ENCODE measurements at regions of chr1 and their contacts with region 1.

Region 1: DNA sequence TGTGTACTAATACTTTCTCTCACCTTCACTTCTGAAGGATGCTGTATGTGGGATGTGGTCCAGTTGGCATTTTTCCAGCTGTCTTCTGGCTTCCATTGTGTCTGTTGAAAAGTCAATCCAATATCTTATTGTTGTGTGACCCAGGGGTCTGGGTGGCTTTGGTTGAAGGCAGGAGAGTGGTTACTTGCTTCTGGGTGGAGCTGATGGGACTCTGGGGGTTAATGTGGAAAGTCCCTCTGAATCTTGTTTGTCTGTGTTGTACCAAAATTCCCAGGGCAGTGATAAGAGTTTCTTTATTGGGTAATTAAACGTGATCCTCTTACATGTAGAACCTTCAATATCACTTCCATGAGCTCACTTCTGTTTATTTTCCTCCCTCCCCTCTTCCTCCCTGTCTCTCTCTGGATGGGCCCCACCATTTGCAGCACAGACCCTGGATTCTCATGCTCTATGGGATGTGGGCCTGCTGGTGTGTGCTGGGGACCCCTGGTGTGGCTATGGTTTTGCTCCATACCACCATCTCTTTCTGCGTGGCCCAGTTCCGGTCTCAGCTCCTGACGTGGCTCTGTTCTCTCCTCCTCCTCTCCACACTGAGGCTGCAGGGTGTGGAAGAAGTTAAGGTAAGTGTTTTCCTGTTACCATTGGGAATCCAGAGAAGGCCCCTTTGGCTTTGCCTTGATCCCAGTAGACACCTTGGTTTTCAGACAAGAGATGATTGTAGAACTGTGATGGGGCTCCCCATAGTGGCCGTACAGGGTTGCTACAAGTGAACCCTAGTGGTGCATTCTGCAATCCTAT is 71.5 kb downstream of the HHAT start:
- DNase-seq: peak; percentile 74
- ATAC-seq: peak; percentile 83
- H3K4me3 ChIP-seq: no peak overlapping the region
- H3K27ac ChIP-seq: peak overlapping the region; percentile 9; the same call in 1 of the 2 replicates
- H3K4me1 ChIP-seq: no peaks in the 10 kb centered on the region
- H3K27me3 ChIP-seq: no peaks in the 10 kb centered on the region
- CTCF ChIP-seq: peak; percentile 85 to 92 (median 85)
- EP300 ChIP-seq: no peak; a peak in 1 of 4 replicates
- POLR2A ChIP-seq: no peak
- RAD21 ChIP-seq: peak; percentile 89

Region 2: DNA sequence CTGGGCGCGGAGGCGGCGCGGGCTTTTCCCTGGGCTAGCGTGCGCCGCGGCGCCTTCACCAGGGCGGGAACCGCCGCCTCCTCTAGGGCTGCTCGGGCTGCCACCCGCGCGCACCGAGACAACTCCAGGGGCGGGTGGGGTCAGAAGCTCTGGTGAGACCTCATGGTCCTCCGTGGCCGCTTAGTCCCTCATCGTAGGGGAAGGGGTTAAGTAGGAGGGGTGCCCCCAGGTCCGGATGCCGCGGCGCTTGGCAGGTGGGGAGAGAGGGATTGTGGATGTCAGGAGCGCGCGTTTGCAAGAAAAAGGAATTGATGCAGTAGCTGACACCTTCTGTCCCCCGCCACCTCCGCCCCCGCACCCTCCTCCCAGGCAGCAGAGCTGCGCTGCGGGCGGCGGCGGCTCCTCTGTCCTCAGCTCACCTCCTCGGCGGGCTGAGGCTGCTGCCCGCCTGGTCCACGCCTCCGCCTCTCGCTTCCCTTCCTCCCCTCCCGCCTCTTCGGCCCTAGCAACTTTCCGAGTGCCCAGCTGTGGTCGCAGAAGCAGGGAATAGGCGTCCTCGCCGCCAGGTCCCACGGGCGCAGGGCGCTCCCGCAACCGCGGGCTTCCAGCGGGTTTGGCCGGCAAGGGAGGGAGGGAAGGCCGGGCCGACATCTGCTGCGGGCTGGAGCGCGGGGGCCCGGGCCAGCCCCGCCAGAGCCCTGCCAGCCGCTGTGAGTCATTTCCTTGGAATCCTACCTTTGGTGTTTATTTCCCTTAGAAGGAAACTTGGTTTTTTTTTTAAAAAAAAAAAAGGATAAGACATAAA is 166.8 kb before region 1 on chr1:
- CTCF ChIA-PET with region 1: no interaction called
- POLR2A ChIA-PET with region 1: no interaction called
- RAD21 ChIA-PET with region 1: no interaction called
- SMC1A ChIA-PET with region 1: no interaction called
- in situ Hi-C with region 1: no loop called
- intact Hi-C with region 1: no loop called
- DNase-seq: no peak
- ATAC-seq: peak; percentile 55
- H3K4me3 ChIP-seq: no peak overlapping the region
- H3K27ac ChIP-seq: no peak overlapping the region
- H3K4me1 ChIP-seq: no peaks in the 10 kb centered on the region
- H3K27me3 ChIP-seq: peaks cover 8 to 9% of the 10 kb centered on the region in 2 experiments
- CTCF ChIP-seq: no peak
- EP300 ChIP-seq: no peak
- POLR2A ChIP-seq: no peak
- RAD21 ChIP-seq: no peak

Region 3: DNA sequence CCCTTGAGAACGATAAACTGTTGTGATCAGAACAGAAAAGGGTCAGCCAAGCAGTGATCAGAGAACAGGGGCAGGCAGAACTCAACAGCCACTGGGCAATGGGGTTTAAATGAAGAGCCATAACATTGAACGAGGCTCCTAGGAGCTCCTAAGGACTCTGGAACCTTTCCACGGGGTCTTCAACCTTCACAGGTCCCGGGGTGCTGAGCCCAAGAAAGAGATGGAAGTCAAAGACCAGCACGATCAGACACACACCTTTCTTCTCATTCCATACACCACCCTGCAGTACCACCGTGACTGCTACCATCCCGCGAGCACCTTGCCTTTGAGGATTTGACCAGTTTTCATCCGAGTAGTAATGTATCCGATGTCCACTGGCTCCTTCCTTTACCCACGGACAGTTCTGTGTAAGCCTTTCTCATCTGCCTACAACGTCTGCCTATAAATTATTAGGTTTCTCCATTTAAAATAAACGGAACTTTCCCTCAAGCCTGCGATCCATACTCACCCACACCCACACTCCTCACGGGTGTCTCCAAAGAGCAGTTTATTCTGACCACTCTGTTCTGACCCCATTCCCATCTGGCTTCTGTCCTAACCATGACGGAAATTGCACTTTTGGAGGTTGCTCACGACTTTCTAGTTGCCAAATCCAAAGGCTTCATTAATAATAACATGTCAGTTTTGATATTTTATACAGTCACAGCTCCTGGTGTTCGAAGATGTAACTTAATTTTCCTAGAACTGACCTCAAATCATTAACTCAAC is 88.3 kb before region 1 on chr1:
- CTCF ChIA-PET with region 1: interaction called, 19 read pairs
- POLR2A ChIA-PET with region 1: no interaction called
- RAD21 ChIA-PET with region 1: interaction called, 23 read pairs
- SMC1A ChIA-PET with region 1: interaction called, 9 read pairs
- in situ Hi-C with region 1: no loop called
- intact Hi-C with region 1: loop called (anchors 5 kb)
- DNase-seq: no peak
- ATAC-seq: no peak; the same call in 1 of the 3 replicates
- H3K4me3 ChIP-seq: no peak overlapping the region
- H3K27ac ChIP-seq: no peak overlapping the region
- H3K4me1 ChIP-seq: no peaks in the 10 kb centered on the region
- H3K27me3 ChIP-seq: peaks cover 0 to 2% of the 10 kb centered on the region in 2 experiments; a peak in 3 of 4 replicates
- CTCF ChIP-seq: no peak
- EP300 ChIP-seq: no peak
- POLR2A ChIP-seq: no peak
- RAD21 ChIP-seq: no peak

Region 4: DNA sequence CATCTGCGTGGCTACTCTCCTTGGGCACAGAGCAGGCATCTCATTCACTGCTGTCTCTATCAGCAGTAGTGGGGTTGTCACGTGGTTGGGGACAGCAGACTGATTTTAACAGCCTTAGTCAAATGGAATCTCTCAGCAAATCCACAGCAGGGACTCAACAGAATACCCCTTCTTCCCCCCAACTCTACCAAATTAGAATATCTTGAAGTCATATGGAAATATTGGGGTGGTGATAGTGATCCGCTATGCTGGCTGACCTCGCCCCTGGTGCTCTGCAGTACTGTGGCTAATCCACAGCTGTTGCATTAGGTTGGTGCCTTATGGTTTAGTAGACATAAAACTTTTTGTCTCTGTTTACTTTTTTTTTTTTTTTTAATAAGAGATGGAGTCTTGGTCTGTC is 47.7 kb before region 1 on chr1:
- CTCF ChIA-PET with region 1: interaction called, 290 read pairs
- POLR2A ChIA-PET with region 1: no interaction called
- RAD21 ChIA-PET with region 1: interaction called, 181 read pairs
- SMC1A ChIA-PET with region 1: interaction called, 286 read pairs
- in situ Hi-C with region 1: no loop called
- intact Hi-C with region 1: no loop called
- DNase-seq: no peak
- ATAC-seq: peak; percentile 40; the same call in 1 of the 3 replicates
- H3K4me3 ChIP-seq: no peak overlapping the region
- H3K27ac ChIP-seq: no peak overlapping the region
- H3K4me1 ChIP-seq: no peaks in the 10 kb centered on the region
- H3K27me3 ChIP-seq: no peaks in the 10 kb centered on the region
- CTCF ChIP-seq: no peak
- EP300 ChIP-seq: no peak
- POLR2A ChIP-seq: no peak
- RAD21 ChIP-seq: no peak

Region 5: GRCh38 chr1:210384630-210385029 is 15.6 kb before region 1 on chr1:
- CTCF ChIA-PET with region 1: interaction called, 379 read pairs
- POLR2A ChIA-PET with region 1: interaction called, 224 read pairs
- RAD21 ChIA-PET with region 1: interaction called, 415 read pairs
- SMC1A ChIA-PET with region 1: interaction called, 683 read pairs
- in situ Hi-C with region 1: no loop called
- intact Hi-C with region 1: no loop called
- DNase-seq: no peak
- ATAC-seq: no peak
- H3K4me3 ChIP-seq: no peak overlapping the region
- H3K27ac ChIP-seq: no peak overlapping the region
- H3K4me1 ChIP-seq: no peaks in the 10 kb centered on the region
- H3K27me3 ChIP-seq: no peaks in the 10 kb centered on the region
- CTCF ChIP-seq: no peak
- EP300 ChIP-seq: no peak
- POLR2A ChIP-seq: no peak
- RAD21 ChIP-seq: no peak

Region 6: DNA sequence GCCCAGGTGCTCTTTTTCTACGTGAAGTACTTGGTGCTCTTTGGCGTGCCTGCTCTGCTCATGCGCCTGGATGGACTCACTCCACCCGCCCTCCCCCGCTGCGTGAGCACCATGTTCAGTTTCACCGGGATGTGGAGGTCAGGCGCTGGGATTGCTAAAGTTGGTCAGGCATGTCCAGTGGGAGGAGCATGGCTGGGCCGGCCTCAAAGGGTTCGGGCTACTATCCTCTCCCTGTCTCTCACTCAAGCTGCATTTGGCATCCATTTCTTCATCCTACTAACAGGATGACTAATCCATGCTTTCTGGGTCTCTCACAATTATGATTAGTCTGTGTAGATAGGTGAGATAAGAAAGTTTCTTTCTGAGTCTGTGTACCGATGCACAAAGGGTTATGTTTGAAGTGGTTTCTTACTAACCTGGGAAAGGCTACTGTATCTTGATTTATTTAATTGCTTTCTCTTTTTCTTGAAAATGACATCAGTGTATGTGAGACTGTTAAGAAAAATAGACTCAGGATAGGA is 64.3 kb after region 1 on chr1:
- CTCF ChIA-PET with region 1: no interaction called
- POLR2A ChIA-PET with region 1: no interaction called
- RAD21 ChIA-PET with region 1: no interaction called
- SMC1A ChIA-PET with region 1: no interaction called
- in situ Hi-C with region 1: no loop called
- intact Hi-C with region 1: no loop called
- DNase-seq: no peak
- ATAC-seq: peak; percentile 95
- H3K4me3 ChIP-seq: no peak overlapping the region
- H3K27ac ChIP-seq: no peak overlapping the region
- H3K4me1 ChIP-seq: no peaks in the 10 kb centered on the region
- H3K27me3 ChIP-seq: no peaks in the 10 kb centered on the region
- CTCF ChIP-seq: no peak
- EP300 ChIP-seq: peak in 1 of 2 experiments; percentile 44; a peak in 1 of 4 replicates
- POLR2A ChIP-seq: no peak
- RAD21 ChIP-seq: no peak

Region 7: DNA sequence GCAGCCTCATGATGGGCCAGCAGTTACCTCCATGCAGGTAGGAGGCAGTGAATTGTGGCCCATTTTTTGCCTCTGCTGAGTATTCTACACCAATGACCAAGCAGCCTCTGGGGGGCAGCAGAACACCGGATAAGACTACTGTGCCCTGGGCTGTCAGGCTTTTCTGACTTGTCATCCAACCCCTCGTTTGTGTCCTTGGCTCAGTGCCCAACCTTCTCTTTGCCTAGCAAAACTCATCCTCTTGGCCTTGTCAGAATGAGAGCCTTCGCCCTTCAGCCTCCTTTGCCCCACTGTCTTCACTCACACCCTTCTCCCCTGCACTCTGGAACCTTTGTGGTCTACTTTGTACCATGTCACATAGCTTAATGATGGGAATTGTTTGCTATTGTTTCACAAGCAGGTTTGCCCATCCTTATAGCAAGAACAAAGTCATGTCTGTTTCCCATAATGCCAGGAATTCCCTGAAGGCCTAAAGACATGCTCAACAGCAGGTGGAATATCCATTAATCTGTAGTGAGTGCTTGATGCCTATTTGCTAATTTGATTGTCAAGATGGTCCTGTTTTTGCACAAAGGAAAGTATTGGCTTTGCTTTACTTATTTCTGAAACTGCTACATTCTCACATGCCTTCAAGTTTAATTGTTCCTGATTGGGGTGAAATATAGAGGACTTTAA is 184.3 kb after region 1 on chr1:
- CTCF ChIA-PET with region 1: interaction called, 16 read pairs
- POLR2A ChIA-PET with region 1: no interaction called
- RAD21 ChIA-PET with region 1: interaction called, 5 read pairs
- SMC1A ChIA-PET with region 1: interaction called, 5 read pairs
- in situ Hi-C with region 1: no loop called
- intact Hi-C with region 1: loop called (anchors 5 kb)
- DNase-seq: peak; percentile 13
- ATAC-seq: peak; percentile 97
- H3K4me3 ChIP-seq: no peak overlapping the region
- H3K27ac ChIP-seq: no peak overlapping the region
- H3K4me1 ChIP-seq: no peaks in the 10 kb centered on the region
- H3K27me3 ChIP-seq: no peaks in the 10 kb centered on the region
- CTCF ChIP-seq: peak; percentile 74 to 78 (median 75)
- EP300 ChIP-seq: no peak
- POLR2A ChIP-seq: no peak
- RAD21 ChIP-seq: peak; percentile 94

Region 8: DNA sequence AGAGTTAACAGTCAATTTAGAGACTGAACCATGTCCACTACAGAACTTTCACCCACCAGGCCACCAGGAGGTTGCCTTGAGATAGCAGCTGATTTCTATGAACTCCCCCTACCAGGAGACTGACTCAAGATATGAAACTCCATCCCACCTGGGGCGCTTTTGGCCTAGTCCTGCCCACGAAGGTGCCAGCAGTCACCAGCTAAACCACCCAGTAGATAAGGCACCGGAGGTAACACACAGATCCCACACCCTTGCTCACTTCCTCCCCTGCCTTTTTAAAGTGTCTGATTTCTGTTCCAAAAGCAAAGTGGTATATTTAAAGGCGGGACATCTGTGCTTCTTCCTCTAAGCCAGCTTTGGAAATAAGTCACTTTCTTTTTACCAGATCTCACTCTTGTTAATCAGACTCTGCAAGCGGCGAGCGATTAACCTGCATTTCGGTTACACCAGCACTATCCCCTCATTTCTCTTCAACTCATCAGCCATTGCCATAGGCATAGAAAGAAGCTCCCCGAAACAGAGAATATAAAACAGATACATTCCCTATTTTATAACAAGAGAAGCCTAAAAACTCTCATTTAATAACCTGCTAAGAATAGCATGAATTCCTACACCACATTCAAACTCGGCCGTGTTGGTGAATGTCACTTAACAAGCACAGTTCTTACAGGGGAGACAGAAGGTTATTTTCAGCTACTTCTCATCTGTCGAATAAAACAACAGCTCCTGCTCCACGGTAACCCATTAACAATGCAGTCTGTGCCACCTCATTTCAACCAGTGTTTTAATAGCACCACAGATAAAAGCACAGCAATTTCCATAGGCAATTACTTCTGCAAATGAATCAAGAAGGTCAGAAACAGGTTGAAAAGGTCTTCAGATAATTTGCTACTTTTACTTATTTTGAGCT is 415.7 kb after region 1 on chr1:
- CTCF ChIA-PET with region 1: no interaction called
- POLR2A ChIA-PET with region 1: no interaction called
- RAD21 ChIA-PET with region 1: no interaction called
- SMC1A ChIA-PET with region 1: no interaction called
- in situ Hi-C with region 1: no loop called
- intact Hi-C with region 1: no loop called
- DNase-seq: no peak
- ATAC-seq: no peak
- H3K4me3 ChIP-seq: no peak overlapping the region
- H3K27ac ChIP-seq: no peak overlapping the region
- H3K4me1 ChIP-seq: no peaks in the 10 kb centered on the region
- H3K27me3 ChIP-seq: no peaks in the 10 kb centered on the region
- CTCF ChIP-seq: no peak
- EP300 ChIP-seq: no peak
- POLR2A ChIP-seq: no peak
- RAD21 ChIP-seq: no peak

Region 9: DNA sequence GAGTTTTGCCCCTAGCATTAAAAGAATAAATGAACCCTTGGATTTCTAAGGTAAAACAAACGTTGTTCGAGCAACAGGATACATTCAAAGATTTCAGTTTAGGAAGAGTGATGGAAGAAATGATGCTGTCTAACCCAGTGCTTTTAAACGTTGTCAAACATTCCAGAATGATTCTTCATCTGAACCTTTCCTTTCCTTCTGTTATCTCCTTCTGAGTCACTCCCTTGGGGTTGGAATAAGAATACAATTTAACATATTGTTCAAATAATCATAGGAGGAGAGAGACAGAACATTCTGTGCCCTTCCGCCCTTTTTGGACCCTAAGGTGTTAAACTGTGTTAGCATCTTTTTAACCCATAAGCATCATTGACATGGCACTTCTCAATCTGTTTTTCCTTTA is 797.9 kb after region 1 on chr1:
- CTCF ChIA-PET with region 1: no interaction called
- POLR2A ChIA-PET with region 1: no interaction called
- RAD21 ChIA-PET with region 1: no interaction called
- SMC1A ChIA-PET with region 1: no interaction called
- in situ Hi-C with region 1: no loop called
- intact Hi-C with region 1: no loop called
- DNase-seq: no peak
- ATAC-seq: no peak
- H3K4me3 ChIP-seq: no peak overlapping the region
- H3K27ac ChIP-seq: no peak overlapping the region
- H3K4me1 ChIP-seq: no peaks in the 10 kb centered on the region
- H3K27me3 ChIP-seq: no peaks in the 10 kb centered on the region; a peak in 1 of 4 replicates
- CTCF ChIP-seq: no peak
- EP300 ChIP-seq: no peak
- POLR2A ChIP-seq: no peak
- RAD21 ChIP-seq: no peak

Region 10: GRCh38 chr1:211654838-211655787 is 1254.9 kb after region 1 on chr1:
- CTCF ChIA-PET with region 1: no interaction called
- POLR2A ChIA-PET with region 1: no interaction called
- RAD21 ChIA-PET with region 1: no interaction called
- SMC1A ChIA-PET with region 1: no interaction called
- in situ Hi-C with region 1: no loop called
- intact Hi-C with region 1: loop called (anchors 10 kb)
- DNase-seq: no peak
- ATAC-seq: peak; percentile 99
- H3K4me3 ChIP-seq: no peak overlapping the region
- H3K27ac ChIP-seq: no peak overlapping the region
- H3K4me1 ChIP-seq: no peaks in the 10 kb centered on the region
- H3K27me3 ChIP-seq: peaks cover 0 to 2% of the 10 kb centered on the region in 2 experiments; a peak in 1 of 4 replicates
- CTCF ChIP-seq: peak; percentile 90 to 97 (median 94); a peak in 5 of 6 replicates
- EP300 ChIP-seq: no peak
- POLR2A ChIP-seq: no peak
- RAD21 ChIP-seq: peak; percentile 98

Measured in GM12878 (cell line).